GM10248 (cell line): ENCODE measurements at regions of chr3 and their contacts with region 1.

Region 1: GRCh38 chr3:188646592-188646991 is 492.6 kb downstream of the LPP start:
- DNase-seq: no peak
- CTCF ChIP-seq: no peak

Region 2: DNA sequence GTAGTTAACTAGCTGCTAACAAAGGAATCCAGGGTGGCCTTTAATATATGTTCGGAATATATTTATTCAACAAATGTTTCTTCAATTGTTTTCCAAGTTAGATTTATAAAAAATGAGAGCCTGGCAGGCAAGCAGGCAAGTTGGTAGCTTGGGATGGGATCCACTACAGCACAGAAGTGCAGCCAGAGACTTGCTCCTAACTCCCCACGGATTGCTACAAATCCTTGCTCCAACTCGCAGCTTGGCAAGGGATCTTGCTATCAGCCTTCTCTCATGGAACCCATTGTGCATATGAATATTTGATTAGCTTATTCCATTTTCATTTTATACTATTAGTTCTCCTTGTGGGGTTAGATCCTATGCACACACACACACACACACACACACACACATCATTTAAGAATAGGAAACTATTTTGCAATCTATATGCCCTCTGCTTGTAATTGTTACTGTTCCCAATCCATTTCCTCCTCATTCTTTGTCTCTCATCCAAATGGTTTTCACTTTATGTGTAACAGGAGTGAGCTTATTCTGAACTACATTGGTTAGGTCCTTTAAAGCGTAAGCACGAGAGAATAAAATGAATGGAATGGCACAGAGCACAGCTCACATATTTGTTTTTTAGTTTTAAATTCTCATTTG is 13.0 kb after region 1 on chr3:
- CTCF ChIA-PET with region 1: interaction called, 10 read pairs
- POLR2A ChIA-PET with region 1: no interaction called
- DNase-seq: no peak
- CTCF ChIP-seq: no peak